ENCODE measurements at regions of chr20 and their contacts with region 1.

Region 1: GRCh38 chr20:1734269-1734858 is 76.8 kb upstream of the SIRPG start:
- DNase-seq: peak in 6 of 9 donors; percentile 17 to 56 (median 46)
- ATAC-seq: peak; percentile 82
- H3K4me3 ChIP-seq: no peak overlapping the region
- H3K4me3 Mint-ChIP-seq: peak overlapping the region in 6 of 10 donors; percentile 23 to 57 (median 40)
- H3K27ac ChIP-seq: no peak overlapping the region
- H3K27ac Mint-ChIP-seq: peak overlapping the region in 6 of 9 donors; percentile 28 to 75 (median 62)
- H3K4me1 ChIP-seq: peaks cover 0 to 29% of the 10 kb centered on the region in 2 donors
- H3K4me1 Mint-ChIP-seq: peaks cover 0 to 36% (median 11%) of the 10 kb centered on the region in 7 donors
- H3K27me3 ChIP-seq: no peaks in the 10 kb centered on the region
- H3K27me3 Mint-ChIP-seq: peaks cover 0 to 9% (median 4%) of the 10 kb centered on the region in 5 donors

Region 2: DNA sequence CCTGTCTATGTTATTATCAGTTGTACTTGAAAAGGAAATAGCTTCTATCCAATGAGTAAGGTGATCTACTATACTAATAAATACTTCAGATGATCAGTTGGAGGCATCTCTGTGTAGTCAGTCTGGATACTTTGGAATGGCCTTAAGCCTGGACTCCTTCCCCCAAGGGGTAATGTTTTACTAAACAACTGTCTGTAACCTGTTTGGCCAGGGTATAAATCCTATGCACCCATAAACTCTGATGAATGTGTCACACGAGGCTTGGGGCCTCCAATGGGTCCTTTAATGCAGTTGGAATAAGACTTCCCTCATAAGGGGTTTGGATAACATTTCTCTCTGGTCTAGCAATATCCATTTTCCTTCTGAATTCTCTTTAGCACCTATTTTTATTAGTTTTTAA is 946.5 kb before region 1 on chr20:
- CTCF ChIA-PET with region 1: no interaction called
- POLR2A ChIA-PET with region 1: no interaction called
- intact Hi-C with region 1: no loop called
- DNase-seq: no peak
- ATAC-seq: no peak
- H3K4me3 ChIP-seq: no peak overlapping the region
- H3K4me3 Mint-ChIP-seq: no peak overlapping the region
- H3K27ac ChIP-seq: no peak overlapping the region
- H3K27ac Mint-ChIP-seq: no peak overlapping the region
- H3K4me1 ChIP-seq: no peaks in the 10 kb centered on the region
- H3K4me1 Mint-ChIP-seq: no peaks in the 10 kb centered on the region
- H3K27me3 ChIP-seq: peaks cover 0 to 3% of the 10 kb centered on the region in 2 donors
- H3K27me3 Mint-ChIP-seq: peaks cover 15 to 58% (median 33%) of the 10 kb centered on the region in 5 donors

Region 3: GRCh38 chr20:1509237-1509636 is 225.1 kb before region 1 on chr20:
- CTCF ChIA-PET with region 1: interaction called, 40 read pairs
- POLR2A ChIA-PET with region 1: interaction called, 6 read pairs
- intact Hi-C with region 1: loop called (anchors 1 kb)
- DNase-seq: peak in 7 of 9 donors; percentile 4 to 48 (median 34)
- ATAC-seq: peak; percentile 81
- H3K4me3 ChIP-seq: no peak overlapping the region
- H3K4me3 Mint-ChIP-seq: no peak overlapping the region
- H3K27ac ChIP-seq: no peak overlapping the region
- H3K27ac Mint-ChIP-seq: no peak overlapping the region
- H3K4me1 ChIP-seq: no peaks in the 10 kb centered on the region
- H3K4me1 Mint-ChIP-seq: no peaks in the 10 kb centered on the region
- H3K27me3 ChIP-seq: no peaks in the 10 kb centered on the region
- H3K27me3 Mint-ChIP-seq: peaks cover 0 to 42% (median 7%) of the 10 kb centered on the region in 5 donors

Region 4: GRCh38 chr20:1576641-1577040 is 157.7 kb before region 1 on chr20:
- CTCF ChIA-PET with region 1: interaction called, 5 read pairs
- POLR2A ChIA-PET with region 1: interaction called, 3 read pairs
- intact Hi-C with region 1: loop called in 1 of 2 experiments (anchors 1 kb)
- DNase-seq: no peak
- ATAC-seq: no peak
- H3K4me3 ChIP-seq: no peak overlapping the region
- H3K4me3 Mint-ChIP-seq: no peak overlapping the region
- H3K27ac ChIP-seq: no peak overlapping the region
- H3K27ac Mint-ChIP-seq: no peak overlapping the region
- H3K4me1 ChIP-seq: no peaks in the 10 kb centered on the region
- H3K4me1 Mint-ChIP-seq: peaks cover 0 to 6% (median 4%) of the 10 kb centered on the region in 7 donors
- H3K27me3 ChIP-seq: no peaks in the 10 kb centered on the region
- H3K27me3 Mint-ChIP-seq: no peaks in the 10 kb centered on the region

Region 5: DNA sequence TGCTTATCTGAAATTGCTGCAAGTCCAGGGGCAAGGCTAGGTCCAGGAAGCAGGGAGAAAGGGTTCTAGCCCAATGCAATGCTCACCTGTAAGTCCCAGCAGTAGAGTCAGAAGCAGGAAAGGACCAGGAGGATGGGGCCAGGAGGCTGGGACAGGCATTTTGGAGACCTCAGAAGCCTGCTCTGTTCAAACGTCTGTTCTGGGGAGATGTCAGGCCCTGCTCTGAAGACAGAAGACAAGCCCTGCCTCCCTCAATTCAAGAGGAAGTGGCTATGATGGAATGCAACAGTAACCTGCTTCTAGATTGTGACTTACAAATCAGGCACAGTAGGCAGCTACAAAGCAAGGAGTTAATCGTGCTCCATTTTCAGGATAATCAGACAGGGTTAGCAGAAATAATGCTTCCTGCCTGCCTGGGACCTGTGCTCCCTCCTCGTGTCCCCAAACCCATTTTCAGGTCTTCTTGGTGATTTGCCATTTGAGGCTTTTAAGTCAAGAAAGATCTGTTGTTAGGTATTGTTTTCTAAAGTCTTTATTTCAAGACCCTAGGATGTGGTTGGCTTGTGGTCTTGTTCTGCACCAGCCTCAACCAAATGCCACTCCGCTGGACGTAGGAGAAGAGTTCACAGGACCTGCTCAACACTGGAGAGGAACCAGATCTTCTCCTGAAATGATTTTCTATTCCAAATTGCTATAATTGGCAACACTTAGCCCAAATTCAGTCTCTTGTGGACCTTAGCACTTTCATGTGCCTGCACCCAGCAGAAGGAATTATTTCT is 76.6 kb before region 1 on chr20 and contains the start of gene SIRPG:
- CTCF ChIA-PET with region 1: interaction called, 19 read pairs
- POLR2A ChIA-PET with region 1: interaction called, 5 read pairs
- intact Hi-C with region 1: loop called (anchors 1 to 5 kb)
- DNase-seq: peak in 6 of 9 donors; percentile 42 to 56 (median 48)
- ATAC-seq: peak; percentile 70
- H3K4me3 ChIP-seq: peak within 1 kb of the TSS; percentile 85
- H3K4me3 Mint-ChIP-seq: peak within 1 kb of the TSS; percentile 93 to 97 (median 96)
- H3K27ac ChIP-seq: peak within 1 kb of the TSS; percentile 87
- H3K27ac Mint-ChIP-seq: peak within 1 kb of the TSS; percentile 86 to 99 (median 95)
- H3K4me1 ChIP-seq: peaks cover 79 to 81% of the 10 kb centered on the region in 2 donors
- H3K4me1 Mint-ChIP-seq: peaks cover 46 to 95% (median 90%) of the 10 kb centered on the region in 7 donors
- H3K27me3 ChIP-seq: no peaks in the 10 kb centered on the region
- H3K27me3 Mint-ChIP-seq: no peaks in the 10 kb centered on the region
- total RNA-seq, gene SIRPG: 25.6 to 71.7 (median 50.2) TPM

Region 6: GRCh38 chr20:1685304-1686052 is 48.9 kb before region 1 on chr20:
- CTCF ChIA-PET with region 1: interaction called, 8 read pairs
- POLR2A ChIA-PET with region 1: no interaction called
- intact Hi-C with region 1: loop called (anchors 1 to 5 kb)
- DNase-seq: peak in 1 of 9 donors; percentile 16
- ATAC-seq: peak; percentile 50
- H3K4me3 ChIP-seq: peak overlapping the region; percentile 65
- H3K4me3 Mint-ChIP-seq: peak overlapping the region; percentile 82 to 97 (median 92)
- H3K27ac ChIP-seq: peak overlapping the region; percentile 80
- H3K27ac Mint-ChIP-seq: peak overlapping the region; percentile 87 to 96 (median 94)
- H3K4me1 ChIP-seq: peaks cover 4 to 28% of the 10 kb centered on the region in 2 donors
- H3K4me1 Mint-ChIP-seq: peaks cover 39 to 89% (median 82%) of the 10 kb centered on the region in 7 donors
- H3K27me3 ChIP-seq: no peaks in the 10 kb centered on the region
- H3K27me3 Mint-ChIP-seq: no peaks in the 10 kb centered on the region